ENCODE measurements at regions of chr22 and their contacts with region 1.

Region 1: GRCh38 chr22:21001560-21002325 is at the start of gene THAP7:
- DNase-seq: peak; percentile 95
- ATAC-seq: peak; percentile 92 to 94
- H3K4me3 ChIP-seq: peak within 1 kb of the TSS; percentile 72 to 94 (median 85)
- H3K27ac ChIP-seq: peak within 1 kb of the TSS; percentile 92 to 99 (median 98)
- H3K4me1 ChIP-seq: peaks cover 26 to 36% of the 10 kb centered on the region in 2 donors
- H3K27me3 ChIP-seq: no peaks in the 10 kb centered on the region
- CTCF ChIP-seq: peak in 1 of 5 experiments; percentile 26
- POLR2A ChIP-seq: peak; percentile 89 to 94
- total RNA-seq, gene THAP7: 44.8 to 76.2 (median 61.7) TPM

Region 2: GRCh38 chr22:20858615-20859416 is 142.9 kb before region 1 on chr22 and contains the starts of genes PI4KA and SNAP29:
- in situ Hi-C with region 1: no loop called
- intact Hi-C with region 1: loop called (anchors 1 kb)
- DNase-seq: peak; percentile 98 to 99
- ATAC-seq: peak; percentile 95 to 98
- H3K4me3 ChIP-seq: peak within 1 kb of the TSS; percentile 68 to 93 (median 84)
- H3K27ac ChIP-seq: peak within 1 kb of the TSS; percentile 83 to 91 (median 90)
- H3K4me1 ChIP-seq: peaks cover 17 to 27% of the 10 kb centered on the region in 2 donors
- H3K27me3 ChIP-seq: no peaks in the 10 kb centered on the region
- CTCF ChIP-seq: peak in 3 of 5 experiments; percentile 5 to 50 (median 23)
- POLR2A ChIP-seq: peak; percentile 93 to 94
- total RNA-seq, gene PI4KA: 40.1 to 59.7 (median 45.4) TPM
- total RNA-seq, gene SNAP29: 22.1 to 41.1 (median 28.7) TPM

Region 3: GRCh38 chr22:20885557-20886323 is 116.0 kb before region 1 on chr22:
- in situ Hi-C with region 1: loop called in 1 of 4 experiments (anchors 10 kb)
- intact Hi-C with region 1: loop called (anchors 10 kb)
- DNase-seq: peak; percentile 68 to 71
- ATAC-seq: peak; percentile 93 to 97
- H3K4me3 ChIP-seq: no peak overlapping the region
- H3K27ac ChIP-seq: peak overlapping the region in 3 of 4 donors; percentile 39 to 46 (median 41)
- H3K4me1 ChIP-seq: no peaks in the 10 kb centered on the region
- H3K27me3 ChIP-seq: no peaks in the 10 kb centered on the region
- CTCF ChIP-seq: peak; percentile 59 to 85 (median 77)
- POLR2A ChIP-seq: no peak

Region 4: GRCh38 chr22:20916983-20917810 is 84.5 kb before region 1 on chr22 and contains the start of gene CRKL:
- in situ Hi-C with region 1: no loop called
- intact Hi-C with region 1: loop called (anchors 1 kb)
- DNase-seq: peak; percentile 96 to 97
- ATAC-seq: peak; percentile 87 to 90
- H3K4me3 ChIP-seq: peak within 1 kb of the TSS; percentile 87 to 97 (median 90)
- H3K27ac ChIP-seq: peak within 1 kb of the TSS; percentile 95 to 97 (median 96)
- H3K4me1 ChIP-seq: peaks cover 18 to 40% of the 10 kb centered on the region in 2 donors
- H3K27me3 ChIP-seq: no peaks in the 10 kb centered on the region
- CTCF ChIP-seq: peak; percentile 92 to 98 (median 96)
- POLR2A ChIP-seq: peak; percentile 99
- total RNA-seq, gene CRKL: 73.3 to 109 (median 84.7) TPM

Region 5: GRCh38 chr22:20964090-20964798 is 37.5 kb before region 1 on chr22:
- in situ Hi-C with region 1: no loop called
- intact Hi-C with region 1: loop called (anchors 5 kb)
- DNase-seq: no peak
- ATAC-seq: no peak
- H3K4me3 ChIP-seq: peak overlapping the region in 2 of 4 donors; percentile 34 to 44
- H3K27ac ChIP-seq: no peak overlapping the region
- H3K4me1 ChIP-seq: peaks cover 0 to 4% of the 10 kb centered on the region in 2 donors
- H3K27me3 ChIP-seq: peaks cover 0 to 16% (median 7%) of the 10 kb centered on the region in 3 donors
- CTCF ChIP-seq: no peak
- POLR2A ChIP-seq: no peak

Region 6: DNA sequence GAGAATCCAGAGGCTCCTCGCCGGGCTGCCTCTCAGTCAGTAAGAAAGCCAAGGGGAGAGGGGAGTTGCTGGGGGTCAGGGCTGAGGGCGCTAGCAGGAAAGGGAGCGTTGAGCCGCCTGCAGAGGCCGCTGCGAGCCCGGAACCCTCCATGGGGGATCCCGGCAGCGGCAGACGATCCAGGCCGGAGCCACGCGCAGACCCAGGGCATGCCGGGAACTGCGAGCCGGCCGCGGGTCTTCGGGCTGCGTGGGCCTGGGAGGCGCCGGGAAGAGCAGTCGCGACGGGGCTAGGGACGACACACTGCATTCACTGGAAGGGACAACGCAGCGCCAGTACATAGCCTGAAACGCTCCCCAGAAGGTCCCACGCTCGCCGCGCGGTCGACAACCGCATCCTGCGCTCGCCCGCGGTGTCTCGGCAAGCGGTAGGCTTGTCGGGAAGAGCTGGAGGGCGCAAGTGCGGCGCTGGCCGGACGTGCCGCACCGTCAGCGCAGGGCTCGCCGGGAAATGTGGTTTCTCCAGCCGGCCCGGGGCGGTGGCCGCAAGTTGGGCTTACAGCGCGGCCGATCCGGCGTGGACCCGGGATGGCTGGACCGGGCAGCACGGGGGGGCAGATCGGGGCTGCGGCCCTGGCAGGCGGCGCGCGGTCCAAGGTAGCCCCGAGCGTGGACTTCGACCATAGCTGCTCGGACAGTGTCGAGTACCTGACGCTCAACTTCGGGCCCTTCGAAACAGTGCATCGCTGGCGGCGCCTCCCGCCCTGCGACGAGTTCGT is 19.8 kb before region 1 on chr22 and contains the start of gene LZTR1:
- in situ Hi-C with region 1: no loop called
- intact Hi-C with region 1: loop called (anchors 1 kb)
- DNase-seq: peak; percentile 73 to 75
- ATAC-seq: peak; percentile 93 to 95
- H3K4me3 ChIP-seq: peak within 1 kb of the TSS; percentile 80 to 97 (median 89)
- H3K27ac ChIP-seq: peak within 1 kb of the TSS; percentile 91 to 94 (median 93)
- H3K4me1 ChIP-seq: peaks cover 24 to 33% of the 10 kb centered on the region in 2 donors
- H3K27me3 ChIP-seq: no peaks in the 10 kb centered on the region
- CTCF ChIP-seq: peak; percentile 34 to 78 (median 71)
- POLR2A ChIP-seq: peak; percentile 93 to 94
- total RNA-seq, gene LZTR1: 25.4 to 36.4 (median 26.3) TPM

Region 7: DNA sequence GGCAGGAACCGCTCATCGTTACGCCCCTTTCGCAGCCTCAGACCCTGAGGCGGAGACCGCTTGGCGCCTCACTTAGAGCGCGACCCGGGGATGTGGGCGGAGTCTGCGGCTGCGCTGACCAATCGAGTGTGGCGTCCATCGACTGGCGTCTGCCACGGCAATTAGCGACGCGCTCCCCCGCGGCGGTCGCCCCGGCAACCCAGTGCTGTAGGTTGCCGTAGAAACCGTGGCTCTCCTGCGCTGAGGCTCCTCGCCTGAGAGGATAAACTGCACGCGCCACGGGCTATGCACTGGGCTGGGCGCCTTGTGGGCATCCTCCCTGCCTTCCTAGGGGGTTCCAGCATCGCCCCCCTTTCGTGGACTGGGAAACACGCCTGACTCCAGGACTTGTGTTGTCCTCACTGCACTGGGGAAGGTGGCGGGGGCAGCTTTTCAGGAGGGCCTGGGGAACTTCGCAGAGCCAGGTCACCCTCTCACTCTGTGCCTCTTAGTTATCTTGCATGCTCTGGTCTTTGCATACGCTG is 12.5 kb after region 1 on chr22:
- in situ Hi-C with region 1: no loop called
- intact Hi-C with region 1: no loop called
- DNase-seq: peak; percentile 67 to 78
- ATAC-seq: peak; percentile 71 to 79
- H3K4me3 ChIP-seq: peak overlapping the region; percentile 56 to 81 (median 73)
- H3K27ac ChIP-seq: peak overlapping the region; percentile 90 to 96 (median 94)
- H3K4me1 ChIP-seq: peaks cover 12 to 26% of the 10 kb centered on the region in 2 donors
- H3K27me3 ChIP-seq: no peaks in the 10 kb centered on the region
- CTCF ChIP-seq: no peak
- POLR2A ChIP-seq: no peak

Region 8: DNA sequence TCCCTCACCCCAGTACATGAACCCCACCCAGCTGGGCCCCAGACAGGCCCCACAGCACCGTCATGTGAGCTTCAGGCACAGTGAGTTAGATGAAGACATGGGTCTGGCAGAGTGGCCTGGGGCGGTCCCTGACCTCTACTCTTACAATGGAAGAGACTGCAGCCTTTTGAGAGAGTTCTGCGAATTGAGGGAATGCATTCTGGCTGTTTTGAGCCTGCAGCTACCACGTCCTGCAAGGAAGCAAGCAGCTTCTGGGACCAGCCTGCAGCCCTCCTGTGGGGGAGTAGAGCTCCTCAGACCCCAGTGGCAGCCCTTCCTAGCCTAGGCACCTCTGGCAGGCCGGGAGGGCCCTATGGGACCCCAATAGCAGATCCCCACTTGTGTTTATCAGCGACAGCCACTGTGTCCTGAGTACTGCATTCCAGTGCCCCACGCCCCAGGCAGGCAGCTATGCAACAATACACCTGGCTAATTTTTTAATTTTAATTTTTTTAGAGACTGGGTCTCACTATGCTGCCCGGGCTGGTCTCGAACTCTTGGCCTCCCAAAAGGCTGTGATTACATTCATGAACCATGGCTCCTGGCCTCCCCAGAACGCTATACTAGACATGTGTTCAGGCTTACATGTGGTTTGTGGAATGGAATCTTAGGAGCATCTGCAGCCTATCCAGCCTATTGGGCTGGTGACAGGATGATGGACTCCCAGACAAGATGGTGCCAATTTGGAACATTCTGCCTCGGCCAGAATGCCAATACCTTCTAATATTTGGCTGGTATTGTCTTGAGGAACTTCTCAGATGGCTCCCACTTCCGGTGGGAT is 31.3 kb after region 1 on chr22:
- in situ Hi-C with region 1: no loop called
- intact Hi-C with region 1: no loop called
- DNase-seq: no peak
- ATAC-seq: no peak
- H3K4me3 ChIP-seq: peak overlapping the region in 2 of 4 donors; percentile 28 to 44
- H3K27ac ChIP-seq: no peak overlapping the region
- H3K4me1 ChIP-seq: peaks cover 15 to 17% of the 10 kb centered on the region in 2 donors
- H3K27me3 ChIP-seq: peaks cover 17 to 20% (median 19%) of the 10 kb centered on the region in 3 donors
- CTCF ChIP-seq: no peak
- POLR2A ChIP-seq: no peak

Region 9: GRCh38 chr22:21045585-21046294 is 44.0 kb after region 1 on chr22 and contains the start of gene LRRC74B:
- in situ Hi-C with region 1: no loop called
- intact Hi-C with region 1: loop called (anchors 1 kb)
- DNase-seq: peak; percentile 81 to 88
- ATAC-seq: peak; percentile 77 to 82
- H3K4me3 ChIP-seq: peak within 1 kb of the TSS; percentile 55 to 78 (median 69)
- H3K27ac ChIP-seq: peak within 1 kb of the TSS; percentile 71 to 91 (median 89)
- H3K4me1 ChIP-seq: peaks cover 23 to 24% of the 10 kb centered on the region in 2 donors
- H3K27me3 ChIP-seq: no peaks in the 10 kb centered on the region
- CTCF ChIP-seq: no peak
- POLR2A ChIP-seq: no peak
- total RNA-seq, gene LRRC74B: not detected